ENCODE measurements at regions of chr2 and their contacts with region 1.

Region 1: DNA sequence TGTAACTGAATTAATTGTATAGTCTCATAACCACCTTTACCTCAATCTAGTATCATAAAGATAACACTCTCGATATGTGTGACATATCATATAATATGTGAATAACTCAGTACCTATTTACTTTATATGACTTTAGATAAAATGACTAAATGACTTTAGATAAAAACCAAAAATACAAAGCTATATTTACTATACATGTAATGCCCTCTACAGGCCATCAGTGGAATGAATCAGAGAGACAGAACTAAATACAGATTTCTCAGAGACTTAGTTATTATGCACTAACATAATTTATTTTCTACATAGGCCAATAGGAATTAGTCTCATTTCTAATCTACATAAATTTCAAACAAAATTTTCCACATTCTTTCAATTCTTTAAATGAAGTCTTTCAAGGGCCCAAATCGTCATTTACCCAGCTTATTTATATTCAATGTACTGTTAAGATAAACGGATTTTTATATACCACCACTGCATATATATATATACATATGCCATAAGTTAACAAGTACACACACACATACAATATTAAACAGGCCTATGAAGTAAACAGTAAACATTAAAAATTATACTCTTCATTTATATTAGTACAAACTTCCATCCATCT is 219.9 kb downstream of the EXOC6B start:
- DNase-seq: peak; percentile 16
- H3K4me3 ChIP-seq: peak overlapping the region in 1 of 2 experiments; percentile 11; a peak in 1 of 4 replicates
- H3K27ac ChIP-seq: no peak overlapping the region
- H3K4me1 ChIP-seq: peaks cover 0 to 13% of the 10 kb centered on the region in 2 experiments; a peak in 1 of 4 replicates
- H3K27me3 ChIP-seq: no peaks in the 10 kb centered on the region
- CTCF ChIP-seq: peak; percentile 85
- EP300 ChIP-seq: no peak
- RAD21 ChIP-seq: peak; percentile 58

Region 2: GRCh38 chr2:71423817-71424420 is 1182.0 kb before region 1 on chr2:
- CTCF ChIA-PET with region 1: no interaction called
- POLR2A ChIA-PET with region 1: no interaction called
- DNase-seq: no peak
- H3K4me3 ChIP-seq: no peak overlapping the region
- H3K27ac ChIP-seq: no peak overlapping the region
- H3K4me1 ChIP-seq: no peaks in the 10 kb centered on the region; a peak in 1 of 4 replicates
- H3K27me3 ChIP-seq: no peaks in the 10 kb centered on the region
- CTCF ChIP-seq: no peak
- EP300 ChIP-seq: no peak
- RAD21 ChIP-seq: no peak

Region 3: DNA sequence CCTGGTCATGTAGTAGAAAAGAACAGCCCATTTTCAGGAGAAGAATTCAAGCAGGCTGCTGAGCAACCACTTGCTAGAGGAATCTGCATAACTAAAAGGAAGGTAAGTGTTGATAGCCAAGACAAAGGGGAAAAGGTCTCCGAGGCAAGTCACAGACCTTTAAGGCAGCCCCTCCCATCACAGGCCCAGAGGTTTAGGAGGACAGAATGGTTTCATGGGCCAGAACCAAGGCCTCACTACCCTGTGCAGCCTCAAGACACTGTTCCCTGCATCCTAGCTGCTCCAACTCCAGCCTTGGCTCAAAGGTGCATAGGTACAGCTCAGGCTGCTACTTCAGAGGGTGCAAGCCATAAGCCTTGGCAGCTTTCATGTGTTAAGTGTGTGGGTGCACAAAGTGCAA is 219.7 kb before region 1 on chr2:
- CTCF ChIA-PET with region 1: no interaction called
- POLR2A ChIA-PET with region 1: no interaction called
- DNase-seq: no peak
- H3K4me3 ChIP-seq: no peak overlapping the region
- H3K27ac ChIP-seq: no peak overlapping the region
- H3K4me1 ChIP-seq: no peaks in the 10 kb centered on the region
- H3K27me3 ChIP-seq: no peaks in the 10 kb centered on the region
- CTCF ChIP-seq: no peak
- EP300 ChIP-seq: no peak
- RAD21 ChIP-seq: no peak

Region 4: GRCh38 chr2:72457801-72458516 is 148.0 kb before region 1 on chr2:
- CTCF ChIA-PET with region 1: no interaction called
- POLR2A ChIA-PET with region 1: no interaction called
- DNase-seq: no peak
- H3K4me3 ChIP-seq: no peak overlapping the region
- H3K27ac ChIP-seq: no peak overlapping the region
- H3K4me1 ChIP-seq: no peaks in the 10 kb centered on the region; a peak in 1 of 4 replicates
- H3K27me3 ChIP-seq: no peaks in the 10 kb centered on the region
- CTCF ChIP-seq: no peak
- EP300 ChIP-seq: no peak
- RAD21 ChIP-seq: no peak

Region 5: DNA sequence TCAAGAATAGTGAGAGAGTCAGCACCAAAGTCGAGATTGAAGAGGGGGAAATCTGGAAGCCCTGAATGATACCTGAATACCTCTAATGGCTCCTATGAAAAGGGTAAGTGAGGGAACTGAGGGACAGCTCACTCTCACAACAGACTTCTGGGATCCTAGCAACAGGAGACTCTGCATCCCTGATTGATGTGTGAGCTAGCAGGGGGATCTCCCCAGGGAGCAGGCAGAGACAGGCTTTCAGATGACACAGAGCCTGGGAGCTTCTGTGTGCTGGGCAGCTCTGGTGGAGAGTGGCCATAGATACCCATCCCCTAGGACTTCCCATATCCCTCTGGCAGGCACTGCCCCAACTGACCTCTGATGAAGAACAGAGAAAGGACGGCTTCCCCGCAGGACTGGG is 13.7 kb after region 1 on chr2:
- CTCF ChIA-PET with region 1: interaction called, 23 read pairs
- POLR2A ChIA-PET with region 1: no interaction called
- DNase-seq: no peak
- H3K4me3 ChIP-seq: no peak overlapping the region
- H3K27ac ChIP-seq: no peak overlapping the region
- H3K4me1 ChIP-seq: 0 out of 4 replicates have a peak, but pooled peaks cover 0 to under 1% of the 10 kb centered on the region in 2 experiments
- H3K27me3 ChIP-seq: no peaks in the 10 kb centered on the region
- CTCF ChIP-seq: no peak
- EP300 ChIP-seq: no peak
- RAD21 ChIP-seq: no peak

Measured in SK-N-SH (cell line).